Cardiac septum (tissue), 1 donor: ENCODE measurements at regions of chr3 and their contacts with region 1.

Region 1: GRCh38 chr3:178385280-178385952 is 150.8 kb upstream of the KCNMB2 start:
- DNase-seq: no peak

Region 2: GRCh38 chr3:176872771-176873209 is 1512.6 kb before region 1 on chr3:
- intact Hi-C with region 1: loop called (anchors 5 kb)
- DNase-seq: no peak

Region 3: DNA sequence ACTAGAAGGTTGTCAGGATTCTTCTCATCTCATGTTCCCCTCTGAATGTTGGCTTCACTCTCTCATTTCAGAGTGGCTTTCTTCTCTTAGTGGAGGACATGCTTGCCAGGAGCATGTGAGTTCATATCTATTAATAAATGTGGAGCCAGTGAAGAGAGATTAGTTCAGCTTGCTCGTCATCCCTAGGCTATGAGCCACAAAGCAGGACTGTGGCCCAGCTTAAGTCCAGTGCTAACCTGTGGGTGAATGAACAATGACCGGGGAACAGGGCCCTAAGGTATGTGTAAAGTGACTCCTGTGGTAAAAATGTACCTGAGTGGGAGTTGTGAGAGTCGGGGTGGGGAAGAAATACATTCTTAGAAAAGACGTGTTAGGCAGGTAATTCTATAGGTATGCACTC is 1091.2 kb before region 1 on chr3:
- intact Hi-C with region 1: loop called (anchors 10 kb)
- DNase-seq: no peak

Region 4: DNA sequence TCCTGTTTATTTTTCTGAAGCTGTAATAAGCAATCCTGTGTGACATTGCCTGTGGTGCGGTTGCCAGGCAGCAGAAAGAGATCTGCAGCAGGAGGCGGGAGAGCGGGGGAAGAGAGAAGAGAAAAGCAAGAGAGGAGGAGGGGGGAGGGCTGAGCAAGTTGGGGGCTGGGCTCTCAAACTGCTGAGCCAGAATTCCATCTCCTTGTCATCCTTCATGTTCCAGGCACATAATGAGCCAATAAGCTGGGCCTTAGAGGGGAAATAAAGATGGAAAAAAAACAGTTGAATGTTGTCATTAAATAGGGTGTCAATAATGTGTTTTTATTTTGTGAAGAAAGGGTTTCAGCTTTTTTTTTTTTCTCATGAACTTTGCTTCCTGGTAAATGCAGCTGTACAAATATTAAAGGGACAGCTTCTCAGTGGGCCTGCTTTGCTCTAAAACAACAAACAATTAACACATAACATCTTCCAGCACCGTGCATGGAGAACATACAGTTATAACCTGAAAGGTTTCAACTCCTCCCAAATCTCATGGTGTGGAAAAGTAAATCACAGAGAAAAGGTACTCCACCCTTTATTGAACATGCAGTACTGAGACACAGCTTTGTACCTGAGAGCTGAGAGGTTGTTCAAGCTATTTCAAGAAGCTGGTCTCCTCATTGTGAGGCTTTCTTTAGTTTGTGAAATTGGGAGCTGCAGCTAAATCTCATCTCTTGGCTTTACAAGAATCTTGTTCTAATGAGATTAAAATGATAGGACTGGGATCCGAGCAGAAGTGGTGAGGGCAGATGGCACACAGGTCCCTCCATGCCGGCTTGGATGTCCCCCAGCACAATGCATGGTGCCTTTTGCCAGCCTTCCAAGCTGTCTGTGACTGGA is 300.2 kb before region 1 on chr3:
- intact Hi-C with region 1: loop called (anchors 10 kb)
- DNase-seq: peak; percentile 90

Region 5: DNA sequence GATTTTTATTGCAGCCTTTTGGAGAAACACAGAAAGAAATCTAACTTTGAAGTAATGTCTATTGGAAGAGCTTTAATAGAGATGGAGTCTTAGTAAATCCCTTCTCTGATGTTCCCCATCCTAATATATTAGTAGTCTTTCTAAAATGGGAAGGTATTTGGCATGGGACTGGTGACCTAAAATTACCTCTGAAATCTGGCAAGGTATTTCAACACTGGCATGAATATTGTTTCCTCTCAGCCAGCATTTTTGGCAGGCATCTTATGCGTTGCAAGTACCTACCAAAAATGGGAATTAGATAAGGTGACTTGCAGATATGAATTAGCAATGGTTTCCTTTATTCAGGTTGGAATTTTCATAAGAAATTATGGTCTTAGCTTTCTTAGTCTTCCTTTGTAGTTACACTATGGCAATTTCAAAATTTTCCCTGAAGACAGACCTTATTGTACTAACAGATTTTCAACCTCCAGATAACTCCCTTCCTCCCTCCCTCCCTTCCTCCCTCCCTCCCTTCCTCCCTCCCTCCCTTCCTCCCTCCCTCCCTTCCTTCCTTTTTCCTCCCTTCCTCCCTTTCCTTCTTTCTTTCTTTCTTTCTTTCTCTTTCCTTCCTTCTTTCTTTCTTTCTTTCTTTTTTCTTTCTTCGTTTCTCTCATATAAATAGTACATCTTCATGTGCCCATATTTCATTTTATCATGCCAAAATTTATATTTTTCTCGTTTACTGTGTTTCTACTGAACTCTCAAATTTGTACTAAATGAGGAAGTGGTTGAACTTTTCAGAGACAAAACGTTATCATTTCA is 17.4 kb before region 1 on chr3:
- intact Hi-C with region 1: no loop called
- DNase-seq: no peak

Region 6: GRCh38 chr3:178443634-178444033 is 58.2 kb after region 1 on chr3:
- intact Hi-C with region 1: no loop called
- DNase-seq: no peak

Region 7: GRCh38 chr3:178947738-178948137 is 562.3 kb after region 1 on chr3:
- intact Hi-C with region 1: no loop called
- DNase-seq: no peak